IMR-90 (cell line): ENCODE measurements at regions of chr19 and their contacts with region 1.

Region 1: GRCh38 chr19:39412100-39412866 is at the start of gene PLEKHG2:
- DNase-seq: peak; percentile 100
- ATAC-seq: peak; percentile 55
- H3K4me3 ChIP-seq: peak within 1 kb of the TSS; percentile 90
- H3K27ac ChIP-seq: peak within 1 kb of the TSS; percentile 98
- H3K4me1 ChIP-seq: peaks cover 26% of the 10 kb centered on the region
- H3K27me3 ChIP-seq: no peaks in the 10 kb centered on the region
- CTCF ChIP-seq: peak; percentile 75
- POLR2A ChIP-seq: peak; percentile 77
- RAD21 ChIP-seq: peak; percentile 54
- total RNA-seq, gene PLEKHG2: 6.5 and 7.8 TPM in 2 replicates

Region 2: GRCh38 chr19:39223681-39224279 is 188.5 kb before region 1 on chr19:
- CTCF ChIA-PET with region 1: no interaction called
- POLR2A ChIA-PET with region 1: no interaction called
- dilution Hi-C with region 1: no loop called
- in situ Hi-C with region 1: no loop called
- intact Hi-C with region 1: no loop called
- DNase-seq: peak; percentile 19
- ATAC-seq: peak; percentile 80
- H3K4me3 ChIP-seq: no peak overlapping the region
- H3K27ac ChIP-seq: no peak overlapping the region
- H3K4me1 ChIP-seq: no peaks in the 10 kb centered on the region
- H3K27me3 ChIP-seq: peaks cover 12% of the 10 kb centered on the region
- CTCF ChIP-seq: no peak
- POLR2A ChIP-seq: no peak
- RAD21 ChIP-seq: no peak

Region 3: GRCh38 chr19:39341719-39342604 is 70.3 kb before region 1 on chr19 and contains the start of gene SAMD4B:
- CTCF ChIA-PET with region 1: no interaction called
- POLR2A ChIA-PET with region 1: no interaction called
- dilution Hi-C with region 1: no loop called
- in situ Hi-C with region 1: no loop called
- intact Hi-C with region 1: loop called (anchors 1 kb)
- DNase-seq: peak; percentile 97
- ATAC-seq: peak; percentile 95
- H3K4me3 ChIP-seq: peak within 1 kb of the TSS; percentile 84
- H3K27ac ChIP-seq: peak within 1 kb of the TSS; percentile 84
- H3K4me1 ChIP-seq: peaks cover 11% of the 10 kb centered on the region
- H3K27me3 ChIP-seq: no peaks in the 10 kb centered on the region
- CTCF ChIP-seq: peak; percentile 80
- POLR2A ChIP-seq: peak; percentile 95
- RAD21 ChIP-seq: peak; percentile 25; the same call in 1 of the 2 replicates
- total RNA-seq, gene SAMD4B: 18.3 and 19.2 TPM in 2 replicates

Region 4: GRCh38 chr19:39397360-39398296 is 14.7 kb before region 1 on chr19:
- CTCF ChIA-PET with region 1: interaction called, 28 read pairs
- POLR2A ChIA-PET with region 1: interaction called, 5 read pairs
- dilution Hi-C with region 1: no loop called
- in situ Hi-C with region 1: no loop called
- intact Hi-C with region 1: loop called (anchors 1 kb)
- DNase-seq: peak; percentile 76
- ATAC-seq: peak; percentile 81
- H3K4me3 ChIP-seq: no peak overlapping the region
- H3K27ac ChIP-seq: peak overlapping the region; percentile 79
- H3K4me1 ChIP-seq: peaks cover 20% of the 10 kb centered on the region
- H3K27me3 ChIP-seq: no peaks in the 10 kb centered on the region
- CTCF ChIP-seq: peak; percentile 96
- POLR2A ChIP-seq: peak; percentile 66
- RAD21 ChIP-seq: peak; percentile 96

Region 5: DNA sequence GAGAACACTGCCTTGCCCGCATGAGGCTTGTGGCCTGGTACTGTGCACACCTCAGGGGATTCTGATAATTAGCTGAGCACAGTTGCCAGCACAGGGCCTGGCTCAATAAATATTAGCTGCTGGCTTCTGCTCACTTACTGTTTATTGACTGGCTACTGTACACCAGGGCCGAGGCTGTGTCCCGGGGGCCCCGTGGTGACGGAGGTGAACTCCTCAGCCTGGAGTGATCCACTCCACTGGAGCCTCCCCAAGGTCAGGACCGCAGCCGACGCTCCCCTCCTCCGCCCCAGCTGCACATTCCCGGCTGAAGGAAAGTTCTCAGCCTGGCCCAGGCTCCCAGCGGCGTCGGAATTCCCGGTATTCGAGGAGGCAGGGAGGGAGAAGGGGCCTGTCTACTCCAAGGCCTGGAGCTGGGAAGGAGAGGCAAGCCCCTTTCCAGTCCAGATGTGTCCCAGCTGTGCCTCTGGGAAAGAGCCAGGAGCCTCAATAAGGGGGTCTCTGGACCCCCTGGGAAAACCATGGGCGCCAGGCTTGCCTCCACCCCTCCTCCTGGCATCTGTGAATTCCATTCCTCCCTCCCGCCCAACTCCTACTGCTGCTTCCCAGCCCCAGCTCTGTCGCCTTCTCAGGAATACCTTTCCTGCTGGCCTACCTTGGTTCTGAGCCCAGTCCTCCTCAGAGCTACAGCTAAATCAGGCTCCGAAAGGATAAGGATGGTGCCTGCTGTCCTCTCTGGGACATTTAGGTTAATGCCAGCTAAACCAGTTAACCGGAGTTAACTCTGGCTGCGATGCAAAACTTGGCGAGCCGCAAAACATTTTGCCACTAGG is 16.2 kb after region 1 on chr19:
- CTCF ChIA-PET with region 1: interaction called, 5 read pairs
- POLR2A ChIA-PET with region 1: interaction called, 13 read pairs
- dilution Hi-C with region 1: no loop called
- in situ Hi-C with region 1: no loop called
- intact Hi-C with region 1: loop called (anchors 1 kb)
- DNase-seq: peak; percentile 96
- ATAC-seq: peak; percentile 90
- H3K4me3 ChIP-seq: no peak overlapping the region
- H3K27ac ChIP-seq: peak overlapping the region; percentile 94
- H3K4me1 ChIP-seq: peaks cover 19% of the 10 kb centered on the region
- H3K27me3 ChIP-seq: no peaks in the 10 kb centered on the region
- CTCF ChIP-seq: no peak
- POLR2A ChIP-seq: peak; percentile 67
- RAD21 ChIP-seq: 0 out of 2 replicates have a peak, but pooled peaks have one; percentile 15

Region 6: DNA sequence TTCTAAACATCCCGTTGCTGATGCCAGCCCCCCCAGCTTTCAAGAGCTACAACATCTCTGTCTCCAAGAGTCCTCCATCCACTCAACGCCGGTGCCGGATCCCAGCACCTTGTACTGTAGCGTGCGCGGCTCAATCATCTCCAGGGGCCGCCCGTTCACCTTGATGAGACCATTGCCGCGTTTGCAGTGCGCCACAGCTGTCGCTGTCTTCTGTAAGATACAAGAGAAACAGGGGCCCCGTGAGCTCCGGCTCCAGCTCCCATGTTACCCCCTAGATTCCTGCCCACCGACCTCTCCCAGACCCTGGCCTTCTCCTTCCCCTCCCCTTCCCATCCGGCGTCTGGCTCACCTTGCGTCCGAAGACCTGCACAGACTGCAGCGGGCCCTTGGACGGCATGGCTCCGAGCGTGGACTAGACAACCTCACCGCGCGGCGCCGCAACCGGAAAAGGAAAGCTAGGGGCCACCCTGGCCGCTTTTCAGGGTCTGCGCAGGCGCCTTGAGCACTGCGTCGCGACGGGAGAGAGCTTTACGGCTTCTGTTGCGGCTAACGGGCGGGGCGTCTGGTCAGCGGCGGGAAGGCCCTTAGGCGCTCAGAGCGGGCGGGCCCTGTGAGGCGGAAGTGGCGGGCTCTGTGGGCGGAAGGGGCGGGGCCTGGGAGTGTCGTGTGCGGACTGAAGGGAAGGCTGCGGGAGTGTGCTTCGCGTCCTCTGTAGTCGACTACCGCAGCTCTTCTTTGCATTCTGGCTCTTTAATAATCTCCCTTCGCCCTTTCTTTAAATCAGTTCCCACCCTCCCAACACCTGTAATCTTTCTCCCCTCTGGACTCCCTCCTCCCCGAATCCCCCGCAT is 23.4 kb after region 1 on chr19 and contains the start of gene RPS16:
- CTCF ChIA-PET with region 1: interaction called, 3 read pairs
- POLR2A ChIA-PET with region 1: interaction called, 13 read pairs
- dilution Hi-C with region 1: no loop called
- in situ Hi-C with region 1: no loop called
- intact Hi-C with region 1: no loop called
- DNase-seq: peak; percentile 96
- ATAC-seq: peak; percentile 93
- H3K4me3 ChIP-seq: peak within 1 kb of the TSS; percentile 77
- H3K27ac ChIP-seq: peak within 1 kb of the TSS; percentile 87
- H3K4me1 ChIP-seq: peaks cover 8% of the 10 kb centered on the region
- H3K27me3 ChIP-seq: no peaks in the 10 kb centered on the region
- CTCF ChIP-seq: peak; percentile 9; the same call in 1 of the 2 replicates
- POLR2A ChIP-seq: peak; percentile 99
- RAD21 ChIP-seq: no peak
- total RNA-seq, gene RPS16: 320 and 410 TPM in 2 replicates